AG04449 (cell line): ENCODE measurements at regions of chr7 and their contacts with region 1.

Region 1: DNA sequence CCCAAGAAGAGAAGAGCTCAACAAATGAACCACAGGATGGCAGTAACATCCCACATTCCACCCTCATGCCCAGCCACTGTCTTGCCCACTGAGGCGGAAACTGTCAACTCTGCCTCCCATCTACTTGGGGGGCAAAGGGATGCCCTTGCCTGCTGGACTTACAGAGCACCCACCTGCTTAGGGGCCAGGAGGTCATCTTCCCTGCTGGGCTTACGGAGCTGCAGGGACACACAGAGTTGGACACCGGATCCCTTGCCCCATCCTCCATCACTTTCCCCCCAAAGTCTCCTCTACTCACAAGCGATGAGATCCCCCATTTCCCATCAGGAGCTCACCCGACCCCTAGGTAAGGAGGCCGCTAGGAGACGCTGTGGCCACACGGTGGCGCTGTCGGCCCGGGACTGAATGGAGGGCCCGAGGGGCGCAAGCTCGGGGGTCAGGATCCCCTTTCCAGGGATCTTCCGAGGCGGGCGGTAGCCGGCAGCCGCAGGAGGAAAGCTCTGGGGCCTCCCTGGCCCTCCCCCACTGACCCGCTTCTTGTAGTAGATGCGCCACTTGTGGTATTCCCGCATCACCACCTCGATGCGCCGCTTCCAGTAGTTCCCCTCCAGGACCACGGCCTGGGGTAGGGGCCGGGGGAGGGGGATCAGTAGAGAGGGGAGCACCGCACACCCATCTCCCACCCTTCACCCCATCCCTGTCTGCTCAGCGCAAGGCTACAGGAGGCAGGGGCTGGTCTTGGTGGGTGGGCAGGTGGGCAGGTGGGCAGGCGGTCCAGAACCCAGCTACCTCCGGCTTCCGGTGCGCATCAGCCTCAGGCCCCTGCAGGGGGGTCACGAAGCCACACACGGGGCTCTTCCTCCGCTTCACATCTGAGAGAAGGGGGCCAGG is 17.3 kb downstream of the MLXIPL start:
- DNase-seq: no peak
- H3K4me3 ChIP-seq: peak overlapping the region; percentile 37
- CTCF ChIP-seq: peak; percentile 91

Region 2: GRCh38 chr7:73418113-73418703 is 188.8 kb before region 1 on chr7:
- CTCF ChIA-PET with region 1: no interaction called
- POLR2A ChIA-PET with region 1: no interaction called
- DNase-seq: no peak
- H3K4me3 ChIP-seq: no peak overlapping the region
- CTCF ChIP-seq: no peak

Region 3: DNA sequence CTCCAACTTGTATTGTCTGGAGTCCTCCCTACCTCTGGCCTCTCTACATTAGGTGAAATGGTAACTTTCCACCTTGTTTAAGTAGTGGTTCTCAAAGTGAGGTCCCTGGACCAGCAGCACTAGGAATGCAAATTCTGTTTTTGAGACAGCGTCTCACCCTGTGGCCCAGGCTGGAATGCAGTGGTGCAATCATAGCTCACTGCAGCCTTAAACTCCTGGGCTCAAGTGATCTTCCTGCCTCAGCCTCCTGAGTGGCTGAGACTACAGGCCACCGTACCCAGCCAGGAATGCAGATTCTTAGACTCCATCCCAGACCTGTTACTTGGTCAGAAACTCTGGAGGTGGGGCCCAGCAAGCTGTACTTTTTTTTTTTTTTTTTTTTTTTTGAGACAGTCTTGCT is 21.9 kb before region 1 on chr7:
- CTCF ChIA-PET with region 1: interaction called, 62 read pairs
- POLR2A ChIA-PET with region 1: no interaction called
- DNase-seq: no peak
- H3K4me3 ChIP-seq: no peak overlapping the region
- CTCF ChIP-seq: no peak

Region 4: GRCh38 chr7:73623798-73624668 is 17.0 kb after region 1 on chr7 and contains the start of gene MLXIPL:
- CTCF ChIA-PET with region 1: interaction called, 50 read pairs
- POLR2A ChIA-PET with region 1: no interaction called
- DNase-seq: no peak
- H3K4me3 ChIP-seq: peak within 1 kb of the TSS; percentile 41
- CTCF ChIP-seq: no peak

Region 5: DNA sequence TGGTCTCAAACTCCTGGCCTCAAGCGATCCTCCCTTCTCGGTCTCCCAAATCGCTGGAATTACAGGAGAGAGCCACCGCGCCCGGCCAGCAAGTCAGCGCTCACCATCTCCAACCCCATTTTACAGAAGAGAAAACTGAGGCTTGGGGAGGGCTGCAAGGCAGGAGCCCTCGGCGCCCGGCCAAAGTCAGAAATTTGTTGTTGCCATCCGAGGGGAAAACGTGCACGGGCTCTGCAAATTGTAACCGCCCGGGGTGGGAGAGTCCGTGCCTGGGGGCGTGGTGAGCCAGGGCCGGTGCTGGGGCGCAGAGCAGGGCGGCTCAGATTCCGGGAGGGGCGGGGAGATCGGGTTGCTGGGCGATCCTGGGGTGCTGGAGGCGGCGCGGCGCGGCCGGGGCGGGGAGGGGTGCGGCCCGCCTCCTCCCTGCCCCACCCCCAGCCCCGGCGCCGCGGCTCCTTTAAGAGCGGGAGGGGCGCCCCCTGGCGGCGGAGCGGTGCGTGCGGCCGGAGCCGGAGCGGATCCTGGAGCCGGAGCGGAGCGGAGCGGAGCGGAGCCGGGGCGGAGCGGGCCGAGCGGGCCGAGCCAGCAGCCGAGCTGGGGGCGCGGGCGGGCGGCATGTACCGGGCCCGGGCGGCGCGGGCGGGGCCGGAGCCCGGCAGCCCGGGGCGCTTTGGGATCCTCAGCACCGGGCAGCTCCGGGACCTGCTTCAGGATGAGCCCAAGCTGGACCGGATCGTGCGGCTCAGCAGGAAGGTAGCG is 60.5 kb after region 1 on chr7 and contains the start of gene VPS37D:
- CTCF ChIA-PET with region 1: interaction called, 34 read pairs
- POLR2A ChIA-PET with region 1: no interaction called
- DNase-seq: peak; percentile 3
- H3K4me3 ChIP-seq: peak within 1 kb of the TSS; percentile 72
- CTCF ChIP-seq: peak; percentile 84

Region 6: GRCh38 chr7:73707142-73707595 is 100.1 kb after region 1 on chr7:
- CTCF ChIA-PET with region 1: interaction called, 24 read pairs
- POLR2A ChIA-PET with region 1: interaction called, 3 read pairs
- DNase-seq: no peak
- H3K4me3 ChIP-seq: no peak overlapping the region
- CTCF ChIP-seq: no peak

Region 7: DNA sequence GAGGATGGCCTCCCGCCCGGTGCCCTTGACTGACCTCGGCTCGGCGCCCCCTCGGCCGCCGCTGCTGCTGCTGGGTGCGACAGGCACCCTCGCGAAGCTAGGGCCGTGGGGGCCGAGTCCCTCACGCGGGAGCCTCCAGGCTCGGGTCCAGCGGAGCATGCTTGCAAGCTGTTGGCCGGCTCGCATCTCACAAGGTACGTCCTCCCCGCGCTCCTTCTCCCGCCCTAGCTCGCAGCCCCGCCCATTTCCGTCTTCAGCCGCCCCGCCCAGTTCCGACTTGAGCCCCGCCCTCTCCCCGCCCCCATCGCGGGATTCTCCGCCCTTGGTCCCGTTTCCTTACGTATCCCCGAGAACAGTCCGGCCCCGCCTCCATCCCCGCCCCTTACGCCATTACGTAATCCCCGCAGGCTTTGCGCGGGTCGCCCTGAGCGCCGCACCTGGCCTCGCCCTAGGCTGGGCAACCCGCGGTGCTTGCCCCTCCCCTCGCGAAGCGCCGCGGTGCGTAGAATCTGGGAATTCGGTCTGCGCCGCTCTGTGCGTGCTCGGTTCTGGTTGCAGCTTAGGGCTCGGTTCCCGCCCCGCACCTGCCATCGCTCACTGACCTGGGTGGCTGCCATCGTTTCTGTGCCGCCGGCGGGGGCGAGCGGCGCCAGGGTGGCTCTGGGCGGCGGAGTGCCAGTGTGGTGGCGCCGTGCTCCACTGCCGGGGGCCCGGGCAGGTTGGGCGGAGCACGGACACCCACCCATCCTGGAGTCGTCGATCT is 131.7 kb after region 1 on chr7 and contains the start of gene ABHD11:
- CTCF ChIA-PET with region 1: interaction called, 231 read pairs
- POLR2A ChIA-PET with region 1: no interaction called
- DNase-seq: peak; percentile 61
- H3K4me3 ChIP-seq: peak within 1 kb of the TSS; percentile 93
- CTCF ChIP-seq: no peak

Region 8: GRCh38 chr7:73856941-73857340 is 249.9 kb after region 1 on chr7:
- CTCF ChIA-PET with region 1: interaction called, 15 read pairs
- POLR2A ChIA-PET with region 1: no interaction called
- DNase-seq: no peak
- H3K4me3 ChIP-seq: no peak overlapping the region
- CTCF ChIP-seq: no peak

Region 9: DNA sequence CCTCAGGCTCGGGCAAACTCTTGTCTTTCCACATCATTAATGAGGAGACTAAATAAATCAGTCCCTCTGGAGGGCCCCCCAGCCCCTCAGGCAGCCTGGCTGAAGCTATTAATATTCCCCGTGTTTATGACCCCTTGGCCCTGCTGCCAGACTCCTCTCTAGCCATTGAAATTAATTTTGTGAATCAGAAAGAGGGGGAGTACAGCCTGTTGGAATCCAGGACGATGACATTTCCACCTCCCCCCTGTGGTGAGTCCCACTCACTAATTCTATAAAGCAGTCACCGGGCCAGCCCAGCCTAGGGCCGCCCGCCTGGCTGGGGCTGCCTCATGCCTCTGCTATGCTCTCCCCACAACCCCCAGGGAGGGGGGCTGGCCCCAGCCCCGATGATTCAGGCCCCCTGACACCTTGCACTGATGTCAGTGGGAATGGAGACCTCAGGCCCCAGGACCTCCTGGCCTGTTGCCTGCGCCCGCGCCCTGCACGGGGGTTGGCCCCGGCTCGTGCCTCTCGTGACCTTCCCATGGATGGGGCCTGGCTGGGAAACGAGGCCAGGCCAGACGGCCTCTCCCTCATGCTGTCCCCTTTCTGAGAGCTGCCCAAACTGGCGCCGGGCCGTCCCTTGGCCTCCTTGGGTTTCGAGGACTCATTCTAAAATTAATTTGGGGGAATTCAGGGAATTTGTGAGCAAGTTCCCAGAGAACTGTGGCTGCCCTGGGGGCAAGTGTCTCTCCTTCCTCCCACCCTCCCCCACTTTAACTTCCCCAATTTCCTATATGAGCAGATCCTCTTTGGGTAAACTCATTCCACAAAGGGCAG is 287.9 kb after region 1 on chr7:
- CTCF ChIA-PET with region 1: no interaction called
- POLR2A ChIA-PET with region 1: no interaction called
- DNase-seq: peak; percentile 87
- H3K4me3 ChIP-seq: no peak overlapping the region
- CTCF ChIP-seq: peak; percentile 22